MCF 10A (cell line): ENCODE measurements at regions of chr6 and their contacts with region 1.

Region 1: DNA sequence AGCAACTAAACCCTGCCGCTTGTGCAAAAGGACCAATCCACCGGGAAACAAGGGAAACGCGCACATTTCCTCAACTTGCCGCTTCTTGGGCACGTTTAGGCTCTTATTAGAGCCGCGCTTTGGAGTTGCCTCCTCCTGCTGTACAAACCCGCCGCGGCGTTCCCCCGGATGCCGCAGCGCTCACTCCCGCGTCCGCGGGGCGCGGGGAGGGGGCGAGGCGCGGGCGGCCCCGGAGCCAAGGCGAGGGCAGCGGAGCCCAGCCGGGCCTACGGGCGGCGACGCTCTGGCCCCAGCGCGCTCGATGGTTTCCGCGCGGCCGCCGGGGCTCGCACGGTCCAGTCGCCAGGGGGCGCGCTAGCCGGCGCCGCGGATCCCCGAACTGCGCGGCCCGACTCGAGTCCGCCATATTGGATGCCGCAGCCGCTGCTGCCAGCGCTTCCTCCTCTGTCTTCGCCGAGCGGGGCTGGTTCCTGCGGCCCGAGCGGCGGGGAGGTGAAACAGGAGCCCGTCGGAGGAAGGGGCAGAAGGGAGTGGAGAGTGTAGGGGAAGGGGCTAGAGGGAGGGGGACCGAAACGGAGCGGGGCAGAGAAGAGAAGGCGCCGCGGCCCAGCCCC is at the start of gene SCAF8:
- DNase-seq: peak; percentile 79
- H3K4me3 Mint-ChIP-seq: peak within 1 kb of the TSS; percentile 97
- H3K27ac Mint-ChIP-seq: peak within 1 kb of the TSS; percentile 98
- H3K4me1 Mint-ChIP-seq: peaks cover 12% of the 10 kb centered on the region
- H3K27me3 Mint-ChIP-seq: no peaks in the 10 kb centered on the region
- CTCF ChIP-seq: peak; percentile 69
- total RNA-seq, gene SCAF8: 41.0 and 49.2 TPM in 2 replicates

Region 2: GRCh38 chr6:153941768-153942167 is 791.4 kb before region 1 on chr6:
- CTCF ChIA-PET with region 1: no interaction called
- POLR2A ChIA-PET with region 1: no interaction called
- intact Hi-C with region 1: no loop called
- DNase-seq: no peak
- H3K4me3 Mint-ChIP-seq: no peak overlapping the region
- H3K27ac Mint-ChIP-seq: no peak overlapping the region
- H3K4me1 Mint-ChIP-seq: no peaks in the 10 kb centered on the region
- H3K27me3 Mint-ChIP-seq: no peaks in the 10 kb centered on the region
- CTCF ChIP-seq: no peak

Region 3: DNA sequence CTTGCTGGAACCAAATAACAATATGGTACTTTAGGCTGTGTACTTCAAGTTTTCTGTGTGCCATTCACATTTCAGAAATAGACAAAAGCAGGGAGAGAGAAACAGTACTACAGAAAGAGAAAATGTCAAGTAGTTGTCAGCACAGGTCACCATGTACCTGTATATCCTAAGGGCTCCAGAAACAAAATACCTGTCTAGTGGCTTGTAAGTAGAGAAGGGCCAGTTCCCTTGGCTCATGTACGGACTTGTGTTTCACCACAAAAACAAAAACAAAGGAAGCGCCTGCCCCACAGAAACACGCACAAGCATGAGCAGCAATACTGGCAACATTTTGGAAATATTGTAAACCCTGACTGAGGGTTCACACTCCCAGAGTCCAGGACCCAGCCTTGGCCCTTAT is 267.0 kb before region 1 on chr6:
- CTCF ChIA-PET with region 1: no interaction called
- POLR2A ChIA-PET with region 1: no interaction called
- intact Hi-C with region 1: loop called (anchors 5 kb)
- DNase-seq: peak; percentile 75
- H3K4me3 Mint-ChIP-seq: no peak overlapping the region
- H3K27ac Mint-ChIP-seq: peak overlapping the region; percentile 43
- H3K4me1 Mint-ChIP-seq: peaks cover 12% of the 10 kb centered on the region
- H3K27me3 Mint-ChIP-seq: no peaks in the 10 kb centered on the region
- CTCF ChIP-seq: no peak

Region 4: DNA sequence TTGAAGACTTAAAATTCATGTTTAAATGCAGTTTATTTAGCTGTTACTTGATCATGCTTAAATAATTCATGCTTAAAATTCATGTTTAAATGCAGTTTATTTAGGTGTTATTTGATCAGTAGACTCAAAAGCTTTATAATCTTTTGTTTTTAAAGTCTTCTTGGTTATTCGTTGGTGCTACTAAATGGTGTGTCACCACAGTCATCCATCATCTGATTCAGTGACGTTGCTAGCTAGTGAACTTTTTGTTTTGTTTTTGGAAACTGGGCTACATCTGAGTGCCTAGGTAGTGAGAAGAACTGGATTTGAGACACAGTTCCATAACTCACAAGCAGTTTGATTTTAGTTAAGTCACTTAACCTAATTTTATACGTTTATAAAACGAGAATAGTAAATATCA is 21.0 kb after region 1 on chr6:
- CTCF ChIA-PET with region 1: interaction called, 3 read pairs
- POLR2A ChIA-PET with region 1: interaction called, 18 read pairs
- intact Hi-C with region 1: no loop called
- DNase-seq: peak; percentile 36
- H3K4me3 Mint-ChIP-seq: no peak overlapping the region
- H3K27ac Mint-ChIP-seq: peak overlapping the region; percentile 87
- H3K4me1 Mint-ChIP-seq: peaks cover 36% of the 10 kb centered on the region
- H3K27me3 Mint-ChIP-seq: no peaks in the 10 kb centered on the region
- CTCF ChIP-seq: no peak

Region 5: DNA sequence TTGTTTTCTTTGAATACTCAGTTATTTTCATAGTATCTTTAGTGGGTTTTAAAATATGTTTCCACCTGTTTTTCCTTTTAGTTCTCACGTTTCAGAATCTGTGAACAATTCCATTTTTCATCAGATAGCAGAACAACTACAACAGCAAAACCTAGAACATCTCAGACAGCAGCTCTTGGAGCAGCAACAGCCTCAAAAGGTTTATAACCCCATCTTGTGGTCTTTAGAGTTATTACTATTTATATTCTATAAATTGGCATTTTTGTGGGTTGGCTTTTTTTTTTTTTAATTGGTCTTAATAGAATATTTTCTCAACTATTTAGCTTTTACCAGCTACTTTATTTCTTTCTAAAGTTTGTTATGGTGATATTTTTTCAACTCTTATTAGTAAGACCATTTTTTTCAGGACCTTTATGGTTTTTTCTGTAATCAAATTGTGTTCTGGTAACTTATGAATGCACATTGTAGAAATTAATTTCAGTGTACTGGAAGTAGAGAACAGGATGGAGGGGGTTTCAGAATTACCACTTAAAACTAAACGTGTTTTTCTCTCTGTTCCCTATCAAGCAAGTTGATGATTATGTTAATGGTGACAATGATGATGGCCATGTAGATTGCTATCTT is 72.3 kb after region 1 on chr6:
- CTCF ChIA-PET with region 1: interaction called, 5 read pairs
- POLR2A ChIA-PET with region 1: interaction called, 4 read pairs
- intact Hi-C with region 1: loop called (anchors 1 kb)
- DNase-seq: peak; percentile 47
- H3K4me3 Mint-ChIP-seq: no peak overlapping the region
- H3K27ac Mint-ChIP-seq: no peak overlapping the region
- H3K4me1 Mint-ChIP-seq: peaks cover under 1% of the 10 kb centered on the region
- H3K27me3 Mint-ChIP-seq: no peaks in the 10 kb centered on the region
- CTCF ChIP-seq: peak; percentile 49